Heart right ventricle (tissue), 16 donors: ENCODE measurements at regions of chr13 and their contacts with region 1.

Region 1: GRCh38 chr13:37510441-37510840 is 88.1 kb downstream of the POSTN start:
- DNase-seq: no peak
- ATAC-seq: no peak
- H3K4me3 ChIP-seq: no peak overlapping the region
- H3K27ac ChIP-seq: no peak overlapping the region
- H3K4me1 ChIP-seq: no peaks in the 10 kb centered on the region
- H3K27me3 ChIP-seq: no peaks in the 10 kb centered on the region
- CTCF ChIP-seq: no peak

Region 2: GRCh38 chr13:37360556-37360955 is 149.9 kb before region 1 on chr13:
- intact Hi-C with region 1: no loop called
- DNase-seq: no peak
- ATAC-seq: no peak
- H3K4me3 ChIP-seq: no peak overlapping the region
- H3K27ac ChIP-seq: no peak overlapping the region
- H3K4me1 ChIP-seq: peaks cover 0 to 4% (median 0%) of the 10 kb centered on the region in 9 donors
- H3K27me3 ChIP-seq: no peaks in the 10 kb centered on the region
- CTCF ChIP-seq: no peak

Region 3: GRCh38 chr13:37495046-37495445 is 15.4 kb before region 1 on chr13:
- intact Hi-C with region 1: loop called in 2 of 10 experiments (anchors 1 kb)
- DNase-seq: no peak
- ATAC-seq: peak in 5 of 8 donors; percentile 44 to 88 (median 68)
- H3K4me3 ChIP-seq: no peak overlapping the region
- H3K27ac ChIP-seq: no peak overlapping the region
- H3K4me1 ChIP-seq: peaks cover 0 to 22% (median 6%) of the 10 kb centered on the region in 9 donors
- H3K27me3 ChIP-seq: no peaks in the 10 kb centered on the region
- CTCF ChIP-seq: no peak

Region 4: GRCh38 chr13:37576601-37577000 is 66.2 kb after region 1 on chr13:
- intact Hi-C with region 1: no loop called
- DNase-seq: no peak
- ATAC-seq: no peak
- H3K4me3 ChIP-seq: no peak overlapping the region
- H3K27ac ChIP-seq: no peak overlapping the region
- H3K4me1 ChIP-seq: no peaks in the 10 kb centered on the region
- H3K27me3 ChIP-seq: no peaks in the 10 kb centered on the region
- CTCF ChIP-seq: no peak